ENCODE measurements at regions of chr3 and their contacts with region 1.

Region 1: DNA sequence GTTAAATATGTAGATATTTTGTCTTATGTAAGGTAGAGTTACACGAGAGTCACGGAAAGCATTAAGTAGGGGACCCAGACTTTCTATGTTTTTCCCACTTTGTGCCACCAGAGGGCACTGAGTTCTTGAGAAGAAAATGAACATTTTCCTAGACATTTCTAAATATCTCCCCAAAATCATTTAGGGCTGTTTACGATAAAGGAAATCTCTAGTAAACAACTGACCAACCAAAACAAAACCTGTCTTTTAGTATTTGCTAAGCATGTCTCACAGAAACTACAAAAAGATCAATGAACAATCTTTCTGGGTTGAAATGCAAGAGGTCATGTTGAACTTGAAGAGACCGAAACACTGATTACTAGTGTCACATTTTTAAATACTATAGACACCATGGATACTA is 16.1 kb downstream of the POU1F1 start:
- DNase-seq: peak; percentile 15
- H3K4me3 ChIP-seq: no peak overlapping the region
- H3K27ac ChIP-seq: no peak overlapping the region
- H3K4me1 ChIP-seq: peaks cover 0 to 5% of the 10 kb centered on the region in 2 experiments; a peak in 1 of 4 replicates
- H3K27me3 ChIP-seq: no peaks in the 10 kb centered on the region
- CTCF ChIP-seq: peak; percentile 80
- EP300 ChIP-seq: no peak
- RAD21 ChIP-seq: peak; percentile 40

Region 2: GRCh38 chr3:87206074-87207034 is 53.9 kb before region 1 on chr3:
- CTCF ChIA-PET with region 1: interaction called, 16 read pairs
- POLR2A ChIA-PET with region 1: no interaction called
- DNase-seq: no peak
- H3K4me3 ChIP-seq: no peak overlapping the region
- H3K27ac ChIP-seq: no peak overlapping the region
- H3K4me1 ChIP-seq: no peaks in the 10 kb centered on the region
- H3K27me3 ChIP-seq: peaks cover 3% of the 10 kb centered on the region; the same call in 1 of the 2 replicates
- CTCF ChIP-seq: no peak
- EP300 ChIP-seq: no peak
- RAD21 ChIP-seq: no peak

Region 3: GRCh38 chr3:87225659-87226058 is 34.6 kb before region 1 on chr3:
- CTCF ChIA-PET with region 1: interaction called, 21 read pairs
- POLR2A ChIA-PET with region 1: no interaction called
- DNase-seq: no peak
- H3K4me3 ChIP-seq: no peak overlapping the region
- H3K27ac ChIP-seq: no peak overlapping the region
- H3K4me1 ChIP-seq: peaks cover 0 to 10% of the 10 kb centered on the region in 2 experiments; a peak in 3 of 4 replicates
- H3K27me3 ChIP-seq: no peaks in the 10 kb centered on the region
- CTCF ChIP-seq: no peak
- EP300 ChIP-seq: no peak
- RAD21 ChIP-seq: no peak

Region 4: GRCh38 chr3:87247430-87247773 is 12.9 kb before region 1 on chr3:
- CTCF ChIA-PET with region 1: interaction called, 23 read pairs
- POLR2A ChIA-PET with region 1: no interaction called
- DNase-seq: no peak
- H3K4me3 ChIP-seq: no peak overlapping the region
- H3K27ac ChIP-seq: no peak overlapping the region
- H3K4me1 ChIP-seq: no peaks in the 10 kb centered on the region
- H3K27me3 ChIP-seq: no peaks in the 10 kb centered on the region
- CTCF ChIP-seq: no peak
- EP300 ChIP-seq: no peak
- RAD21 ChIP-seq: no peak

Region 5: GRCh38 chr3:87272718-87273341 is 12.6 kb after region 1 on chr3:
- CTCF ChIA-PET with region 1: interaction called, 28 read pairs
- POLR2A ChIA-PET with region 1: no interaction called
- DNase-seq: no peak
- H3K4me3 ChIP-seq: no peak overlapping the region
- H3K27ac ChIP-seq: no peak overlapping the region
- H3K4me1 ChIP-seq: peaks cover 0 to 5% of the 10 kb centered on the region in 2 experiments; a peak in 1 of 4 replicates
- H3K27me3 ChIP-seq: peaks cover 16% of the 10 kb centered on the region; the same call in 1 of the 2 replicates
- CTCF ChIP-seq: no peak
- EP300 ChIP-seq: no peak
- RAD21 ChIP-seq: no peak

Region 6: DNA sequence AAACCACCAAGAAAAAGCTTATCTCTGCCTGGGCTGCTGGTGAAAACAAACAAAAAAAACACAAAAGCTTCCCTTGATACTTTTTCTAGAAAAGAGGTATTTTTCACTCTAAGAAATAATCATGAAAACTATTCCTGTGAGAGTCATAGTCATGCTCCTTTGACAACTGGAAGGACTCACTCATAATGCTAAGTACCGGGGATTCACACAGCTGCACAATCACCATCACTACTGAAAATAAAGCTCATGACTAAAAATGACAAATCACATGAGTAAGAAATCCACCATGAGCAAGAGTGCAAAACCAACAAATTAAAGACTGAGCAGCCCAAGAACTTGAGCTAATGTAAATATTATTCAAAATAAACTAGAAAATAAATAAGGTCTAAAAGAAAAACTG is 26.7 kb after region 1 on chr3:
- CTCF ChIA-PET with region 1: interaction called, 17 read pairs
- POLR2A ChIA-PET with region 1: no interaction called
- DNase-seq: no peak
- H3K4me3 ChIP-seq: no peak overlapping the region
- H3K27ac ChIP-seq: no peak overlapping the region
- H3K4me1 ChIP-seq: no peaks in the 10 kb centered on the region
- H3K27me3 ChIP-seq: no peaks in the 10 kb centered on the region
- CTCF ChIP-seq: no peak
- EP300 ChIP-seq: no peak
- RAD21 ChIP-seq: no peak

Region 7: GRCh38 chr3:87468938-87469337 is 208.7 kb after region 1 on chr3:
- CTCF ChIA-PET with region 1: no interaction called
- POLR2A ChIA-PET with region 1: no interaction called
- DNase-seq: no peak
- H3K4me3 ChIP-seq: no peak overlapping the region
- H3K27ac ChIP-seq: no peak overlapping the region
- H3K4me1 ChIP-seq: no peaks in the 10 kb centered on the region
- H3K27me3 ChIP-seq: no peaks in the 10 kb centered on the region
- CTCF ChIP-seq: no peak
- EP300 ChIP-seq: no peak
- RAD21 ChIP-seq: no peak